ENCODE measurements at regions of chr20 and their contacts with region 1.

Region 1: DNA sequence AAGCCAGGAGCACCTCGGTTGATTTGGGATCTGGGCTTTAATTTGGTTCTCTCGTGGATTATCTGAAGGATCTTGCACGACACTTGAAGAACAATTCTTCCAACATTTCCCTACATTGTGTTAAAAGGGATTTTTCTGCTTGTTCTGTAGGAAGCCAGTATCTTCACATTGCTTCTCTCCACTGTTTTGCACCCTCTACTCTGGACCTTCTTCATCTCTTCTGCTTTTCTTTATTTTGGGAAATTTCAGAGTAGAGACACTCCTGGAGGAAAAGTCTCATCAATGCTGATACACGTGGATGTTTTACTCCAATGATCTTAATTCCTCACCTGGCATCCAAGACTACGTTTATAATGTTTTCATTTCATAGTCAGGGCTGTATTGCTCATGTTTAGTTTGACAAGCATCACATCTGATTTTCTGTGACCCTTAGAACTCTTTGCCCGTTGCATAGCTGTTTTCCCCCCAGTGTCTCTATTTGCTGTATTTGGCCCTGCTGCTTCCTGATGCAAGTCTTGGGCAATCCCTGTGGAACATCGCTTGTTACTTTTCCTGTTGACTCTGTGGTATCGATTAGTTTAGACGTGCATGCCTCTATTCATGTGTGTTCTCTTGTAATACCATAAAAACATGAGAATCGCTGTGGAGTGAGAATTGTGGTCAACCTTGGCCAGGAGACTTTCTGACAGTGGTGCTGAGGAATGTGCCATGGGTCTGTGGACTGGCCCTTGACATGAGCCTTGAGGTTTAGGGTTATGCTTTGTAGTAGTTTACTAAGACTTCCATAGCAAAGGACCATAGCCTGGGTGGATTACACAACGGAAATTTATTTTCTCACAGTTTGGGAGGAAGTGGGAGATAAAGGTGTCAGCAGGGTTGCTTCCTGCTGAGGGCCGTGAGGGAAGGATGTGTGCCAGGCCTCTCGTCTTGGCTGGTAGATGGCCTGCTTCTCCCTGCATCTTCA is 12.5 kb downstream of the PLCB1 start:
- DNase-seq: no peak
- ATAC-seq: peak in 1 of 2 donors; percentile 60

Region 2: GRCh38 chr20:8309634-8310033 is 165.1 kb after region 1 on chr20:
- intact Hi-C with region 1: loop called in 1 of 2 experiments (anchors 10 kb)
- DNase-seq: no peak
- ATAC-seq: peak; percentile 55 to 75

Measured in left cardiac atrium (tissue), 4 donors.